Activated CD4-positive, alpha-beta T cell treated with anti-CD3 and anti-CD28 coated beads, Interleukin-2, amount 10 ng/mL, durations not matched to agents 24 days and 14 days (primary cell): ENCODE measurements at regions of chr6 and their contacts with region 1.

Region 1: DNA sequence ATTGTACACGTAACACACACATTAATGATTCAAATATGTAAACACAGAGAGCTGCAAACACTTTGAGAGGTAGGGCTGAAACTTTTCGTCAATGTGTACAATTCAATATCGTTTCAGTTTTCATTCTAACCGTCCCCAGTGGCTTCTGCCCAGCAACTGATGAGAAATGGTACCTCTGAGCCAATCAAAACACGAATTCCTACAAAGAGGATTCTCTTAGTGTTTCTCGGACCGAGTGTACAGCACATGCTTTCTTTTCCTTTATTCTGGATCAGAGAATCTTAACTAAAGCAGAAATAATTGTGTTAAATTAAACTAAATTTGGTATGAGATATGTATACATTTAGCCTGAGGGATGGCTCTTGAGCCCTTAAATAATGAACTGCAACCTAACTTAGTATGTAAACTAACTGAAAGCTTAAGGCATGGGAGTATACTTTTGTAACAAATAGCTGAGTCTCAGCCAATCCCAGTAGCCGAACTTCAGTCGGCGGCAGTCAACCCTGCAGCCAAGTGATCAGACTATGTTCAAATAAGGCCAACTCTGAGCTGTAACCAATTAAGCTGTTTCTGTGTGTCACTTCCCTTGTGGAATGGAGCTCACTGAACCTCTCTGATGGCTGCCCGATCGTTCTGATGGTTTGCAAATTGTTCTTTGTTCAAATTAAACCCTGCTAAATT is 16.1 kb downstream of the BTN2A1 start:
- DNase-seq: peak; percentile 95
- H3K4me3 Mint-ChIP-seq: peak overlapping the region; percentile 96
- H3K27ac Mint-ChIP-seq: peak overlapping the region; percentile 100
- H3K4me1 Mint-ChIP-seq: peaks cover 30% of the 10 kb centered on the region
- H3K27me3 Mint-ChIP-seq: no peaks in the 10 kb centered on the region

Region 2: DNA sequence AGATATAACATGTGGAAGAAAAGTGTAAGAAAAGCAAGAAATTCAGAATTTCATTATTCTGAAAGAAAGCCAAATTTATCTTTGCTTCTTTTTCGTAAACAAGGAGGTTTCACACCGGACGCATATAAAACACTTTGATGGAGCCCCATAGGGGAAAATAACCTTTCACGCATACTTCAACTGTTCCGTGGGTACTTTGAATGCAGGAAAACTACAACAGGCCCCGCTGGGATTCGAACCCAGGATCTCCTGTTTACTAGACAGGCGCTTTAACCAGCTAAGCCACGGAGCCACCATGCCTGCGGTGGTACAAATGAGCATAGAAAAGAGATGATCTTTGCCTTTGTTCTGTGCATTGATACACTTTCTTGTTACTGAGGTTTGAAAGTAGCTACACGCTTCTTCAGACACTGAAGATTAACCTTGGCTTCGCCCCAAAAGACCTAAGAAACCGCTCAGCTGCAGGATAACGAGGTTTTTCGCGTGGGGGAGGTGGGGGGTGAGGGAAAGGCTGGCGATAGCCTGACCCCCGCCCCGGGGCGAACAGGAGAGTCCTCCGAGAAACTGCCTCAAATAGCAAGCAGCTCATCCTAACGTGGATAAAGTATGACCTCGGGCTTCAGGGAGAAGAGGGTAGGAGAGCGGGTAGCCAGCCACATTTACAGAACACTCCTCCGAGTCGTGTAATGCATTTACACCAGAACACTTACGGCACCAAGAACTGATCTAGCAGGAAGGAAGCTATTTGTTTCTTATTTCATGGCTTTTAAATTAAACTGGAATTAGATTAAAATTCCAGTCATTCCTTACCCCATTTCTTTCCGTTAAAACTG is 59.0 kb after region 1 on chr6:
- intact Hi-C with region 1: loop called (anchors 1 kb)
- DNase-seq: peak; percentile 97
- H3K4me3 Mint-ChIP-seq: peak overlapping the region; percentile 96
- H3K27ac Mint-ChIP-seq: peak overlapping the region; percentile 97
- H3K4me1 Mint-ChIP-seq: peaks cover 38% of the 10 kb centered on the region
- H3K27me3 Mint-ChIP-seq: peaks cover 2% of the 10 kb centered on the region

Region 3: DNA sequence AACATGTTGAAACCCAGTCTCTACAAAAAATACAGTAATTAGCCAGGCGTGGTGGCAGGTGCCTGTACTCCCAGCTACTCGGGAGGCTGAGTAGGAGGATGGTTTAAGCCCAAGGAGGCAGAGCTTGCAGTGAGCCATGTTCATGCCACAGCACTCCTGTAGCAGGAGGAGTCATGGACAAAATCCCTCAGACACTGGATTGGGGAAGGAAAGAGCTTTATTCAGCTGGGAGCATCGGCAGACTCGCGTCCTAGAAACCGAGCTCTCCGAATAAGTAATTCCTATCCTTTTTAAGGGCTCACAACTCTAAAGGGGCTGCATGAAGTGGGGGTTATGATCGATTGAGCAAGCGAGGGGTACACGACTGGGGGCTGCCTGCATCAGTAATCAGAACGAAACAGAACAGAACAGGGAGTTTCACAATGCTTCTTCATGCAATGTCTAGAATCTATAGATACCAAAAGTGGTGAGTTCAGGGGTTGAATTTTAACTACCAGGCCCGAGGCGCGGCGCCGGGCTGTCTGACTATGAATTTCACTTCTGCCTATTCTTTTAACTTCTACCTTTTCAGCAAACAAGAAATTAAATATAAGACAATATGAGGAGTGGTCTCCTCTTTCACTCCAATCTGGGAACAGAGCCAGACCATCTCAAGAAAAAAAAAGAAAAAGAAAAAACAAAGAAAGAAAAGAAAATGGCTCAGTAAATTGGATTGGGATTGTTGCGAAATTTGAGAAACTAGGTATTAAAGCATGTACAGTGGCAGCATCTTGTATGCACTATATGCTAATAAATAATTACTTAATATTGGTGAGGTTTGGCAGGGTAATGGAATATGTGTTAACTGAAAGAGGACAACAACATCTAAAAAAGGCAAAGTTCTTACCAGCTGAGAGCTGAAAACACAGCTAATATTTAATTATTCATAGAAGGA is 87.9 kb after region 1 on chr6:
- intact Hi-C with region 1: no loop called
- DNase-seq: no peak
- H3K4me3 Mint-ChIP-seq: no peak overlapping the region
- H3K27ac Mint-ChIP-seq: no peak overlapping the region
- H3K4me1 Mint-ChIP-seq: peaks cover 8% of the 10 kb centered on the region
- H3K27me3 Mint-ChIP-seq: peaks cover 13% of the 10 kb centered on the region